ENCODE measurements at regions of chr11 and their contacts with region 1.

Region 1: GRCh38 chr11:67288452-67289225 is 464 bp upstream of the ANKRD13D start:
- DNase-seq: peak; percentile 83
- ATAC-seq: peak; percentile 88
- H3K4me3 Mint-ChIP-seq: peak overlapping the region; percentile 66
- H3K27ac Mint-ChIP-seq: peak overlapping the region; percentile 95; the same call in 1 of the 2 replicates
- H3K4me1 Mint-ChIP-seq: peaks cover 15% of the 10 kb centered on the region
- H3K27me3 Mint-ChIP-seq: no peaks in the 10 kb centered on the region
- CTCF ChIP-seq: peak; percentile 26; the same call in 1 of the 2 replicates

Region 2: GRCh38 chr11:67277231-67277961 is 11.2 kb before region 1 on chr11:
- CTCF ChIA-PET with region 1: interaction called, 26 read pairs
- POLR2A ChIA-PET with region 1: interaction called, 15 read pairs
- DNase-seq: peak; percentile 83
- ATAC-seq: peak; percentile 84
- H3K4me3 Mint-ChIP-seq: peak overlapping the region; percentile 30; the same call in 1 of the 2 replicates
- H3K27ac Mint-ChIP-seq: peak overlapping the region; percentile 95
- H3K4me1 Mint-ChIP-seq: peaks cover 26% of the 10 kb centered on the region
- H3K27me3 Mint-ChIP-seq: no peaks in the 10 kb centered on the region
- CTCF ChIP-seq: no peak

Region 3: DNA sequence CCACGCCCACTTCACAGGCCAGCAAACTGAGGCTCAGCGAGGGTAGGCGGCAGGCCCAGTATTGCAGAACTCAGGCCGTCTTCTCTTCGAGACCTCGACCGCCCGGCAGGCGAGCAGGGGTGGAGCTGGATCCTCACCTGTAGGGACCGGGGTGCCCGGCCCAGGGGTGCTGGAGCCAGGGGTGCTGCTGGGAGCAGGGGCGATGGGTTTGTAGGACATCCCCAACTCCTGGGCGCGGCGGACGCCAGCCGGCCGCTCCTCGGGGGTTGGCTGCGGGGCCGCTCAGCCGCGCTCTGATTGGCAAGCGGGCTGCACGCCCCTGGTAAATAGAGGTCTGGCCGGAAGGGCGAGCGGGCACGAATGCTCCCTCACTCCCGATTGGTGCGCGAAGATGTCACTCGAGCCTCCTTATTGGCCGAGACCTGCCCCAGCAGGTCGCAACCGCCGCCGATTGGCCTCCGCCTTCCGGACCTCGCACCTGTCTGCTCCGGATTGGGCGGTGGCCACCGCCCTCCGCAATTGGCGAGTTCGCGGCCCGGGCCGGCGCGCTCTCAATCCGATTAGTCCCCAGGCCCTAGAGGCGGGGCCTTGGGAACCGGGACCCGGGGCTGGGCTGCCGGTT is 219.3 kb after region 1 on chr11 and contains the start of gene CDK2AP2:
- CTCF ChIA-PET with region 1: no interaction called
- POLR2A ChIA-PET with region 1: no interaction called
- DNase-seq: peak; percentile 100
- ATAC-seq: peak; percentile 84
- H3K4me3 Mint-ChIP-seq: peak within 1 kb of the TSS; percentile 83
- H3K27ac Mint-ChIP-seq: peak within 1 kb of the TSS; percentile 89
- H3K4me1 Mint-ChIP-seq: peaks cover 27% of the 10 kb centered on the region
- H3K27me3 Mint-ChIP-seq: peaks cover 23% of the 10 kb centered on the region
- CTCF ChIP-seq: no peak
- total RNA-seq, gene CDK2AP2: 47.6 to 53.1 TPM (median 52.5 TPM) in 3 replicates

Measured in WTC11 (cell line).